ENCODE measurements at regions of chr2 and their contacts with region 1.

Region 1: DNA sequence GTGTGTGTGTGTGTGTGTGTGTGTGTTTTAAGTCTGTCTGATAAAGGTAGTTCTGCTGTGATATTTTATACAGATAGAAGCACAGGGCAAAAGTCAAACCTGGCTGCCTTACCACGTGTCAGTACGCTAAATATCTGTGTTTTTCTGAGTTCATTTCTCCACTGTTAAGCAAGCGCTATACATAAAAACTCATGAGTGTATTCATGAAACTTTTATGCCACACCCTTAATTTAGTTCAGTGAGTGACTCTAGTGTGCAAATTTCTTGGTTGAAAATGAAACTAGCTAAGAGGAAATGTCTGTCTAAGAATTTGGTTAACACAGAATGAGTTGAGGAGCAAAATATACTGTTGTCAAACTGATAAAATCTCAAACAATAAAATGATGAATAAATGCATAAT is 11.2 kb downstream of the CASP10 start:
- DNase-seq: no peak
- ATAC-seq: no peak
- H3K4me3 ChIP-seq: no peak overlapping the region
- H3K27ac ChIP-seq: no peak overlapping the region
- H3K4me1 ChIP-seq: no peaks in the 10 kb centered on the region
- CTCF ChIP-seq: no peak
- EP300 ChIP-seq: no peak
- POLR2A ChIP-seq: no peak
- RAD21 ChIP-seq: no peak

Region 2: GRCh38 chr2:201182650-201183364 is 11.3 kb before region 1 on chr2 and contains the start of gene CASP10:
- CTCF ChIA-PET with region 1: interaction called, 19 read pairs
- POLR2A ChIA-PET with region 1: no interaction called
- DNase-seq: peak; percentile 84 to 89
- ATAC-seq: peak; percentile 95 to 97
- H3K4me3 ChIP-seq: peak within 1 kb of the TSS; percentile 52
- H3K27ac ChIP-seq: peak within 1 kb of the TSS; percentile 73 to 85
- H3K4me1 ChIP-seq: peaks cover 11% of the 10 kb centered on the region; the same call in 2 of the 3 replicates
- CTCF ChIP-seq: peak; percentile 71
- EP300 ChIP-seq: no peak
- POLR2A ChIP-seq: no peak
- RAD21 ChIP-seq: peak; percentile 68 to 77
- polyA plus RNA-seq, gene CASP10: 6.5 and 6.8 TPM in 2 replicates

Region 3: DNA sequence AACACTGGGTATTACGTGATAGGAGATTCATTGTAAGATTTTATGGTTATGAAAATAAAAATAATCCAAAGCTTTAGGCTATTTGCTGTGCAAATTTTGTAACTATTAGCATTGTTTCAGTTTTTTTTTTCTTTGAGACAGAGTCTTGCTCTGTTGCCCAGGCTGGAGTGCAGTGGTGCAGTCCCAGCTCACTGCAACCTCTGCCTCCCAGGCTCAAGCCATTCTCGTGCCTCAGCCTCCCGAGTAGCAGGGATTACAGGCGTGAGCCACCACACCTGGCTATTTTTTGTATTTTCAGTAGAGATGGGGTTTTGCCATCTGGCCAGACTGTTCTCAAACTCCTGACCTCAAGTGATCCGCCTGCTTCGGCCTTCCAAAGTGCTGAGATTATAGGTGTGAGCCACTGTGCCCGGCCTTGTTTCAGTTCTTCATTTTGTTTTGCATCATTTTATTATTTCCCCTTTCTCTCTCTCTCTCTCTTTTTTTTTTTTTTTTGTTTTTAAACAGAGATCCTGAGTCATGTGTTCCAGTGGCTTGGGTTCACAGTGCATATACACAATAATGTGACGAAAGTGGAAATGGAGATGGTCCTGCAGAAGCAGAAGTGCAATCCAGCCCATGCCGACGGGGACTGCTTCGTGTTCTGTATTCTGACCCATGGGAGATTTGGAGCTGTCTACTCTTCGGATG is 14.6 kb after region 1 on chr2:
- CTCF ChIA-PET with region 1: interaction called, 11 read pairs
- POLR2A ChIA-PET with region 1: no interaction called
- DNase-seq: no peak
- ATAC-seq: no peak
- H3K4me3 ChIP-seq: no peak overlapping the region
- H3K27ac ChIP-seq: no peak overlapping the region
- H3K4me1 ChIP-seq: no peaks in the 10 kb centered on the region
- CTCF ChIP-seq: no peak
- EP300 ChIP-seq: no peak
- POLR2A ChIP-seq: no peak
- RAD21 ChIP-seq: no peak

Measured in A549 (cell line).